Activated T-helper 1 cell treated with anti-CD3 and anti-CD28 coated beads, Interleukin-12 subunit alpha, Interleukin-12 subunit beta, Interleukin-2, Interleukin-4 antibody, amounts not matched to agents 30 ng/mL and 10 ng/mL and 1 ng/mL, durations not matched to agents 14 hours and 24 hours and 36 hours (primary cell): ENCODE measurements at regions of chr2 and their contacts with region 1.

Region 1: GRCh38 chr2:230798769-230799399 is 65.9 kb upstream of the ITM2C start:
- DNase-seq: peak; percentile 27
- H3K4me3 Mint-ChIP-seq: no peak overlapping the region
- H3K27ac Mint-ChIP-seq: no peak overlapping the region
- H3K4me1 Mint-ChIP-seq: peaks cover 26% of the 10 kb centered on the region
- H3K27me3 Mint-ChIP-seq: peaks cover under 1% of the 10 kb centered on the region

Region 2: GRCh38 chr2:230007931-230008707 is 790.8 kb before region 1 on chr2:
- intact Hi-C with region 1: loop called (anchors 5 kb)
- DNase-seq: peak; percentile 66
- H3K4me3 Mint-ChIP-seq: no peak overlapping the region
- H3K27ac Mint-ChIP-seq: no peak overlapping the region
- H3K4me1 Mint-ChIP-seq: peaks cover 11% of the 10 kb centered on the region
- H3K27me3 Mint-ChIP-seq: no peaks in the 10 kb centered on the region

Region 3: DNA sequence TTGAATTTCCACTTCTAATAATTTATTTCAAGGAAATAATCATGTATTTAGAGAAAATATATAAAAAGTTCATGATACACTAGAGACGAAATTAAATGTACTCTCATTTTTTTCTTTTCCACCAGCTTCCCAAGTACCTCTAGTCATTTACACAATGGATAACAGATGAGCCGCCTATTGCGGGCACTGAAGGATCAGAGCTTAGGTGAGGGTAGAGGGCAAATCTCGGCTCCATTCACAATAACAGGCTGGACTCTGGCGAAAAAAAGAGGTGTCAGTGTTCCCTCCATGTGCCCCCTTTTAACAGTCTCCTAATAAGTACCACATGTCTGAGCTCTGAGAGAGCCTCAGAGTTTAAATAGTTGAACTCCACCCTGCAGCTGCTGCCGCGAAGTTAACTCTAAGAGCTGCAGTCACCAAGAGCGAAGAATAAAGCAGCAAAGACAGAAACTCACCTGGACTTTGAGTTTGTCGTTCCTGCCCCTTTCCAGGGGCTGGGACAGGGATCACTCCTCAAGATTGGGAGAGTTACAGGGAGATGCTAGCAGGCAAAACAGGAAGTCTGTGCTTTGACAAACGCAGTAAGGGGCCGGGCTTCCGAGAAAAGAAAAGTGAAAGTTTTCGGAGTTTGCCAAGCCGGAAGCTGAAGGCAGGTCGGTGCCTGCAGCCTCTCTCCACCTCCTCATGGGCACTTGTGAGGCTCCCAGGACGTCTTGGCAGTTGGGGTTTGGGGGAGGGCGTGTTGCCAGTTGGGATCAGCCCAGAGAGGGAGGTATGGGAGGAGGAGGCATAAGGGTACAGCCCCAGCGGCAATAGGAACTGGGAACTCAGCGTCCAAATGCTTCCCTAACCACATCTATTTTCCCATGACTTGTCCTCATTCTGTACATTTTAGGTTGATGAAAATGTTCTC is 579.2 kb before region 1 on chr2 and contains the start of gene SP110:
- intact Hi-C with region 1: loop called (anchors 10 kb)
- DNase-seq: peak; percentile 84
- H3K4me3 Mint-ChIP-seq: peak within 1 kb of the TSS; percentile 93
- H3K27ac Mint-ChIP-seq: peak within 1 kb of the TSS; percentile 95
- H3K4me1 Mint-ChIP-seq: peaks cover 76% of the 10 kb centered on the region
- H3K27me3 Mint-ChIP-seq: no peaks in the 10 kb centered on the region
- total RNA-seq, gene SP110: 141 and 142 TPM in 2 replicates

Region 4: DNA sequence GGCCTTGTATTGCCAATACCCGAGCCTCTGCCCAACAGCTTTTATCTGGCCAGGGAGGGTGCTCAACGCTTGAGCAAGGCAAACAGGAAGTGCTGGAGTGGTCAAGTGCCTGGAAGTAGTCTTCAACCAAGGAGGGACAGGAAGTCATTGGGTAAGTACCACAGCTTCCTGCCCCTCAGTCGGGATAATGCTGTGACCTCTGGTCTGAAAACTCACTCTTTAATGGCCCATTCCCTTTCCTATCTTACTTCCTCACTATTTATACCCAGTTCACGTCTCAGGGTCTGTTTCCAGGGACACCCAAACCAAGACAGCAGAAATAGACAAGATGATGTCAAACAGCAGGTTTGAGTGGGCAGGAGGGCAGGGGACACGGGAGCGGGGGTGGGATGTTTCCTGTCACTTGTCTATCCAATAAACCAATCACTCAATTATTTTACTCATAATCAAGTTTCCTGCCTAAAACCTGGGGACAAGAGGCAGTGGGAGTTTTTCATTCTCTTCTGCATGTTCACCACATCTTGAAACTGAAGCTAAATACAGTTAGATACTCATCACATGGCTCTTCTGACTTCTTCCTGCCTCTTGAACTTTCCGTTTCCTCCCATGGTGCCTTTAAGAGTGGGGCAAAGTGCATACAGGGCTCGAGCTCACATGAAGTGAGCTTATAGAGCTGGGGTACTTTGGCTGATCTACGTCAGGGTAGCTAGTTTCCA is 155.2 kb before region 1 on chr2:
- intact Hi-C with region 1: loop called (anchors 1 kb)
- DNase-seq: peak; percentile 51
- H3K4me3 Mint-ChIP-seq: peak overlapping the region; percentile 39
- H3K27ac Mint-ChIP-seq: peak overlapping the region; percentile 97
- H3K4me1 Mint-ChIP-seq: peaks cover 29% of the 10 kb centered on the region
- H3K27me3 Mint-ChIP-seq: no peaks in the 10 kb centered on the region

Region 5: DNA sequence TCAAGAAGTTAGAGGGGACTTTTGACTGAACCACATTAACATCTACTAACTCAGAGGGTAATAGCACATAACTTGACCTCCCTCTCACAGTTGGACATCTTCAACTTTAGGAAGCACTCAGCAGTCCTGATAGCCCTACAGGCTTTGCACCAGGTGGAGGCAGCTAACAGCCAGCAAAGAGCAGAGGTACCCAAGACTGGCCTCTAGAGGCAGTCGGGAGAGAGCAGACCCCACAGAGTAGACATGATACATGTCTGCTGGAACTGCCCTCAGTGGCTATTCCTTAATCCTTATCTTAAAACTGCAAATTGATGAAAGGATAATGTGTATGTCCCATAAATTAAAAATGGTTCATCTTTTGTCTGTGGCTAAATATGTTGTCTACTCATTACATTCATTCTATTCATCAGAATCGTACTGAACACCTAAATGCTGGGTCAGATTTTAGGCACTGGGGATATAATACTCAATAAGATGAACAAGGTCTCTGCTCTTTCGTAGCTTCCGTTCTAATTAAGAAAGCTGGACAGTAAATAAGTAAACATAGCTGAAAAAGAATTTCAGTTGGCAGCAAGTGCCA is 36.5 kb before region 1 on chr2:
- intact Hi-C with region 1: no loop called
- DNase-seq: no peak
- H3K4me3 Mint-ChIP-seq: no peak overlapping the region
- H3K27ac Mint-ChIP-seq: peak overlapping the region; percentile 11
- H3K4me1 Mint-ChIP-seq: peaks cover 73% of the 10 kb centered on the region
- H3K27me3 Mint-ChIP-seq: no peaks in the 10 kb centered on the region

Region 6: GRCh38 chr2:230864598-230865306 is 65.9 kb after region 1 on chr2 and contains the start of gene ITM2C:
- intact Hi-C with region 1: no loop called
- DNase-seq: peak; percentile 61
- H3K4me3 Mint-ChIP-seq: peak within 1 kb of the TSS; percentile 90
- H3K27ac Mint-ChIP-seq: peak within 1 kb of the TSS; percentile 71
- H3K4me1 Mint-ChIP-seq: peaks cover 24% of the 10 kb centered on the region
- H3K27me3 Mint-ChIP-seq: peaks cover 61% of the 10 kb centered on the region
- total RNA-seq, gene ITM2C: 4.2 and 5.2 TPM in 2 replicates